BJ (cell line): ENCODE measurements at regions of chr10 and their contacts with region 1.

Region 1: DNA sequence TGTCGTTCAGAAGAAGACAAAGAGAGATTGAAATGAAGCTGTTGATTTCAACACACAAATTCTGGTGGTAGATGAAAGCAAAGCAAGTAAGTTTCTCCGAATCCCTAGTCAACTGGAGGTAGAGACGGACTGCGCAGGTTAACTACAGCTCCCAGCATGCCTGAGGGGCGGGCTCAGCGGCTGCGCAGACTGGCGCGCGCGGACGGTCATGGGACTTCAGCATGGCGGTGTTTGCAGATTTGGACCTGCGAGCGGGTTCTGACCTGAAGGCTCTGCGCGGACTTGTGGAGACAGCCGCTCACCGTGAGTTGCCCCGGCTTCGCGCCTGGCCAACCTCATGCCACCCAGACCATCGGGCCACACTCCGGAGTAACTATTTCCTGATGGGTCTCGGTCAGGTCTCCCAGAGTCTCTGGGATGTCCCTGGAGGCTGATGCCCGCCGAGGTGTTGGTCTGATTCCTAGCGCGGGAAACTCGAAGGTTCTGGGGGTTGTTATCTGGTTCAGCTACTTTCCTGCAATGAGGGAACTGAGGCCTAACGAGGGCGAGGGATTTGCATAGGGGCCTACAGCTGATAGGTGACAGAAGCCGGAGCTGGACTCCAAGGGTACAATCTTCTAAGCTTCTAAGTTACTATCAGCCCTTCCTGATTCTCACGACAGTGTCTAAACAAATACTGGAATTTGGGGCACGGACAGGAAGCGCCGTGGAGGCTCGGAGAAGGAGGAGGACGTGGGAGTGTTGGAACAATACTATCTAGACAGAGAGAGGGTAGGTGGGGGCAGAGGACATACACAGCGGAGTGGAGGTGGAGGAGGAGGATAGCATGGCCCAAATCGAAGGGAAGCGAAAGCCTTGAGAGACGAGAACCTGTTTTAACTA is at the start of gene RPP30:
- DNase-seq: peak; percentile 47
- H3K4me3 ChIP-seq: peak within 1 kb of the TSS; percentile 66
- H3K27me3 ChIP-seq: peaks cover 6% of the 10 kb centered on the region; the same call in 1 of the 2 replicates
- CTCF ChIP-seq: no peak
- polyA plus RNA-seq, gene RPP30: 26.2 and 47.9 TPM in 2 replicates

Region 2: DNA sequence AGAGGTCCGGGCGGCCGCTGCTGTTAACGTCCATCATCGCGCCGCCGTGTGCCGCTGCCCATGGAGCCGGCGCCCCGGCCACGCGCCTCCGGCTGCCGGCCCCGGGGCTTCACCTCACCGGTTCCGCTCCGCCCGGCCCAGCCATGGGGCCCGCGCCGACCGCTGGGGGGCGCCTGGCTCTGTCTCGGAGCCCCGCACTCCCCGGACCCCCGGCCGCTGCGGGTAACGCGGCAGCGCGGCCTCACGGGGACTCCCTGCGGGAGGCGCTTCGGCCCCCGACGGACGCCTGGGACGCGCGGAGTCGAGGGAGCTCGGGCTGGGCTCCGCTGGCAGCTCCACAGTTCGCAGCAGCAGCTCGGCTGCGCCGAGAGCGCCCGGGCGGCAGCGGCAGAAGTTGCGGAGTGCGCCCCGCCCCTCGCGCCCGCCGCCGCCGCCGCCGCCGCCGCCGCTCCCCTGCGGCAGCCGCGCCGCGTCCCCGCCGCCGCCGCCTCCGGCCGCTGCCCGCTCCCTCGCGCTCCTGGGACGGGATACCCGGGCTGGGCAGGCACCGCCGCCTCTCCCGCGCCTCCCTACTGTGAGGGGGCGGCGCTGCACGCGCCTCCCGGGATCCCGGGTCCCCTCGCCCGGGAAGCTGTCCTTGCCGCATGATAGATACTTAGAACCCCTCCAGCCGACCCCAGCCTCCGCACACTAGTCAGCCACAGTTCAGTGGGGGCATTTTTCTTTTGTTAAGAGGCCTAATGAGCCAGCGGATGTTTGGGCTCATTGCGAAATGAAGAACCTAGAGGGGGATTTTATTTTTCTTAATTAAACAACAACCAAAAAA is 14.2 kb before region 1 on chr10 and contains the start of gene HTR7:
- CTCF ChIA-PET with region 1: interaction called, 13 read pairs
- POLR2A ChIA-PET with region 1: no interaction called
- DNase-seq: no peak
- H3K4me3 ChIP-seq: peak within 1 kb of the TSS; percentile 62
- H3K27me3 ChIP-seq: peaks cover 9% of the 10 kb centered on the region
- CTCF ChIP-seq: peak; percentile 27; the same call in 1 of the 2 replicates
- polyA plus RNA-seq, gene HTR7: 0.16 and 0.17 TPM in 2 replicates